CD4-positive, alpha-beta memory T cell (primary cell): ENCODE measurements at regions of chr22 and their contacts with region 1.

Region 1: GRCh38 chr22:36065775-36066559 is 37.3 kb upstream of the RBFOX2 start:
- DNase-seq: peak; percentile 55 to 64 (median 60)
- H3K4me3 ChIP-seq: peak overlapping the region; percentile 49 to 67
- H3K4me3 Mint-ChIP-seq: peak overlapping the region; percentile 82 to 91 (median 86)
- H3K27ac ChIP-seq: peak overlapping the region; percentile 15
- H3K27ac Mint-ChIP-seq: peak overlapping the region; percentile 42 to 91 (median 79)
- H3K4me1 ChIP-seq: peaks cover 11% of the 10 kb centered on the region
- H3K4me1 Mint-ChIP-seq: peaks cover 6 to 10% (median 9%) of the 10 kb centered on the region in 4 donors
- H3K27me3 ChIP-seq: no peaks in the 10 kb centered on the region
- H3K27me3 Mint-ChIP-seq: peaks cover 0 to 2% of the 10 kb centered on the region in 2 donors

Region 2: DNA sequence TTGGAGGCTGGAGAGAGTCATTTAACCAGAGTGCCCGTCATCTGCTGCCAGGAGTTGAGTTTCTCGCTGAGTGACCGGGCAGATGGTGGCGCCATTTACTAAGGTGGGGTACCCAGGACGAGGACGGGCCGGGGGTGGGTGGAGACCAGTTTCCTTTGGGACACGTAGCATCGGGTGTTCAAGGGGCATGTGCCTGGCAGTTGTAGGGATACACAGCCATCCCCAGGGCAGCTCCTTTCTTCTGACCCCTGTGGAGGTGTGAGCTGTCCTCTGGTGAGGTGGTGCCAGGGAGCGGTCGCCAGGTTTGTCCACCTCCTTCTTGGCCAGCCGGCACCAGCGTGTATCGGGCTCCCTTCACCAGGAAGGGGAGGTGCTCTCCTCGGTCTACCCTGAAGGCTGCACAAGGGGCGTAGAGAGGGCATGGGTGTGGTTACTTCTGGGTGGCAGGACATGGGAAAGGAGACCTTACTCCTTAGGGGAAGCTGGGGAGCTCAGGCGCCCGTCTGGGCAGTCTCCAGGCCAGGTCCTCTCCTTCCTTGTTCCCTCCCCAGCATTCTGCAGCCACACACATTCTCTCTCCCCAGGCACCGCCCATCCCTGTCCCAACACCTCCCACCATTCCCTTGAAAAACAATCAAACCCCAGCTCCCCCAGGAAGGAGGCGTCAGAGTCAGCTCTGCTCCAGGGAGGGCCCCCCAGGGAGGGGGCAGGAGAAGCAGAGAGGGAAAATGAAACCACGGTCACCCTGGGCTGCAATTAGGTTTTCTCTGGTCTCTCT is 438.5 kb before region 1 on chr22:
- CTCF ChIA-PET with region 1: interaction called, 12 read pairs
- POLR2A ChIA-PET with region 1: no interaction called
- intact Hi-C with region 1: loop called (anchors 5 kb)
- DNase-seq: peak in 4 of 5 donors; percentile 22 to 37 (median 31)
- H3K4me3 ChIP-seq: peak overlapping the region in 1 of 2 donors; percentile 30
- H3K4me3 Mint-ChIP-seq: peak overlapping the region; percentile 31 to 85 (median 72)
- H3K27ac ChIP-seq: no peak overlapping the region
- H3K27ac Mint-ChIP-seq: peak overlapping the region; percentile 10 to 74 (median 66)
- H3K4me1 ChIP-seq: peaks cover 16% of the 10 kb centered on the region
- H3K4me1 Mint-ChIP-seq: peaks cover 10 to 23% (median 18%) of the 10 kb centered on the region in 4 donors
- H3K27me3 ChIP-seq: no peaks in the 10 kb centered on the region
- H3K27me3 Mint-ChIP-seq: peaks cover 0 to 2% of the 10 kb centered on the region in 2 donors

Region 3: DNA sequence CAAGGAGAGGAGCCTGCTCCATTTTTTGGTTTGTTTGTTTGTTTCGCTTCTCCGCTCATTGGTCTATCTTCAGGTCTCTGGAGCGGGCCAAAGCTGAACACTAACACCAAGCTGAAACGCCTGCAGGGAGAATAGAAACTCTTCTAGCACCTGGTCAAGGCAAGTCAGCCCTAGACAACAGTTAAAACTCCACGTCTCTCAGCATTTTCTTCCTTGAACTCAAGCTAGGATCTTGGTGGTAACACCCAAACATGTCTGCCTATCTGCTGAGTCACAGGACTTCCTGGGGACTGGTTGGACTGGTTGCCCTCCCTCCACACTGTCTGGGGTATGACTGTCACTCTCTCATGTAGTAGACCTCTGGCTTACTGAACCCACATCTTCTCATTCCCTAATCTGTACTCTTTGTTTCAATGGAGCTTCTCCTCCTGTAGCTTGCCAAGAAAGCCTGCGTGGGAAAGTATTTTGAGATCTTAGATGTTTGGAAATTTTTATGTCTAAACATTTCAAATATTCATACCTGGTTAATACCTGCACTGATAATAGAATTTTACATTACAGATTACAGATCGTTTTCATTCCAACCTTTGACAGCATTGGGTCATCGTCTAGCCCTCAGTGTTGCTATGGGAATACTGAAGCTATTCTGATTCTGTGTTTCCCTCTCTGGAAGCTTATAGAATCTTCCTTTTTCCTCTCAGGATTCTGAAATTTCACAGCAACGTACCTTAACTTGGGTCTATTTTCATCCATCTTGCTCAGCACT is 13.3 kb before region 1 on chr22:
- CTCF ChIA-PET with region 1: interaction called, 40 read pairs
- POLR2A ChIA-PET with region 1: no interaction called
- intact Hi-C with region 1: no loop called
- DNase-seq: no peak
- H3K4me3 ChIP-seq: no peak overlapping the region
- H3K4me3 Mint-ChIP-seq: peak overlapping the region in 1 of 8 donors; percentile 20
- H3K27ac ChIP-seq: no peak overlapping the region
- H3K27ac Mint-ChIP-seq: peak overlapping the region in 1 of 7 donors; percentile 49
- H3K4me1 ChIP-seq: no peaks in the 10 kb centered on the region
- H3K4me1 Mint-ChIP-seq: peaks cover 0 to 2% (median under 1%) of the 10 kb centered on the region in 4 donors
- H3K27me3 ChIP-seq: no peaks in the 10 kb centered on the region
- H3K27me3 Mint-ChIP-seq: peaks cover 5 to 8% of the 10 kb centered on the region in 2 donors

Region 4: GRCh38 chr22:36123673-36124630 is 58.0 kb after region 1 on chr22:
- CTCF ChIA-PET with region 1: interaction called, 15 read pairs
- POLR2A ChIA-PET with region 1: no interaction called
- intact Hi-C with region 1: loop called (anchors 5 kb)
- DNase-seq: peak; percentile 90 to 93 (median 92)
- H3K4me3 ChIP-seq: peak overlapping the region in 1 of 2 donors; percentile 59
- H3K4me3 Mint-ChIP-seq: peak overlapping the region; percentile 72 to 84 (median 80)
- H3K27ac ChIP-seq: peak overlapping the region; percentile 37
- H3K27ac Mint-ChIP-seq: peak overlapping the region; percentile 66 to 98 (median 93)
- H3K4me1 ChIP-seq: peaks cover 11% of the 10 kb centered on the region
- H3K4me1 Mint-ChIP-seq: peaks cover 3 to 18% (median 9%) of the 10 kb centered on the region in 4 donors
- H3K27me3 ChIP-seq: no peaks in the 10 kb centered on the region
- H3K27me3 Mint-ChIP-seq: no peaks in the 10 kb centered on the region

Region 5: GRCh38 chr22:36156515-36157419 is 90.8 kb after region 1 on chr22:
- CTCF ChIA-PET with region 1: interaction called, 13 read pairs
- POLR2A ChIA-PET with region 1: no interaction called
- intact Hi-C with region 1: no loop called
- DNase-seq: peak; percentile 67 to 91 (median 69)
- H3K4me3 ChIP-seq: peak overlapping the region; percentile 50 to 75
- H3K4me3 Mint-ChIP-seq: peak overlapping the region; percentile 90 to 99 (median 92)
- H3K27ac ChIP-seq: peak overlapping the region; percentile 95
- H3K27ac Mint-ChIP-seq: peak overlapping the region; percentile 92 to 98 (median 97)
- H3K4me1 ChIP-seq: peaks cover 81% of the 10 kb centered on the region
- H3K4me1 Mint-ChIP-seq: peaks cover 71 to 99% (median 87%) of the 10 kb centered on the region in 4 donors
- H3K27me3 ChIP-seq: no peaks in the 10 kb centered on the region
- H3K27me3 Mint-ChIP-seq: no peaks in the 10 kb centered on the region

Region 6: GRCh38 chr22:36481393-36482168 is 415.6 kb after region 1 on chr22 and contains the start of gene TXN2:
- CTCF ChIA-PET with region 1: interaction called, 4 read pairs
- POLR2A ChIA-PET with region 1: no interaction called
- intact Hi-C with region 1: loop called (anchors 10 kb)
- DNase-seq: peak; percentile 97 to 99 (median 97)
- H3K4me3 ChIP-seq: peak within 1 kb of the TSS; percentile 80 to 86
- H3K4me3 Mint-ChIP-seq: peak within 1 kb of the TSS; percentile 90 to 100 (median 98)
- H3K27ac ChIP-seq: peak within 1 kb of the TSS; percentile 80
- H3K27ac Mint-ChIP-seq: peak within 1 kb of the TSS; percentile 93 to 100 (median 99)
- H3K4me1 ChIP-seq: peaks cover 22% of the 10 kb centered on the region
- H3K4me1 Mint-ChIP-seq: peaks cover 12 to 31% (median 17%) of the 10 kb centered on the region in 4 donors
- H3K27me3 ChIP-seq: no peaks in the 10 kb centered on the region
- H3K27me3 Mint-ChIP-seq: peaks cover 0 to 3% of the 10 kb centered on the region in 2 donors
- total RNA-seq, gene TXN2: 33.5 to 34.5 TPM